ENCODE measurements at regions of chr17 and their contacts with region 1.

Region 1: DNA sequence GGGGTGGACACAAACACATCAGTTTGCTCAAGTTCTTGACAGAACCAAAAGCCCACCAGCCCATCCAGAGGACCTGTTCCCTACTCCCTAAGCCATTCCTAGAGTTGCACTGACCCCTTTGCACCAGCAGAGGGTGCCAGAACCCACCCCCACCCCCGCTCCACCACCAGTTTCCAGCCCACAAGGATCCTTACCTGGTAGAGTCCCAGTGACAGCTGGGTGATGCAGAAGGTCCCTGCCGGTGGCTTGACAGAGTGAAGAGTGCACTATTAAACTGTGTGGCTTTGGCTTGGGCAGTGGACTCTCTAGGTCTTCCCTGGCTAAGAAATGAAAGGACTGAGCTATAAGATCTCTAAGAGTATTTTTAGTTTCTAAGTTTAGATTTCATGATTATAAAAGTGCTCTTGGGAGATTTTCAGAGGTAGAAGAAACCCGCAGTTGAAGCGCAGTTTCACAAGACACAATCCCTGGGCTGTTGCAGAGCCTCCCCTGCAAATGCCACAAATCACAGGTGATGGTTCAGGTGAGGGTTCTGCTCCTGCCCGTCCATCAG is 73.3 kb upstream of the MTMR4 start:
- H3K4me3 ChIP-seq: no peak overlapping the region
- H3K27ac ChIP-seq: no peak overlapping the region
- H3K4me1 ChIP-seq: no peaks in the 10 kb centered on the region
- CTCF ChIP-seq: peak; percentile 90

Region 2: DNA sequence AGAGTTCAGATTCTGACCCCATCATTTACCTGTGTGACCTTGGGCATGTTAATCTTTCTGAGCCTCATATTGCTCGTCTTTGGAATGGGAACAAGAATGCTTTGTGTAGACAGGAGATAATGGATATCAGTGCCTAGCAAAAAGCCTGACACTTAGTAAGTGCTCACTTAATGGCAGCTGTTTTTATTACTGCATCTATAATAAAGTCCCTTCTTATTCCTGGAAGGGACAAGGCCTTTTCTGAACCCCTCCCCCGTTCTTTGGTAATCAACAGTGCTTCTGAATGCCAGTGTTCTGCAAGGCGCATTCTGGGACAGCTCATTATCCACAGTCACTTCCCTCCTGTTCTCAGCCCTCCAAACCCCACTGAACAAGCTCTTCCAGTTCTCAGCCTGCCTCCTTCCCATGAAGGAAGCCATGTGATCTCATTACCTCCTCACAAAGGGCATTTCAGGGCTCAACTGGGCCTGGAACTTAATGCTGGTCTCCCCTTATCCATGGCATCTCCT is 210.6 kb before region 1 on chr17:
- CTCF ChIA-PET with region 1: no interaction called
- POLR2A ChIA-PET with region 1: no interaction called
- H3K4me3 ChIP-seq: no peak overlapping the region
- H3K27ac ChIP-seq: no peak overlapping the region
- H3K4me1 ChIP-seq: peaks cover 4% of the 10 kb centered on the region; the same call in 1 of the 2 replicates
- CTCF ChIP-seq: no peak

Region 3: GRCh38 chr17:58531661-58532554 is 55.9 kb before region 1 on chr17:
- CTCF ChIA-PET with region 1: interaction called, 11 read pairs
- POLR2A ChIA-PET with region 1: interaction called, 6 read pairs
- H3K4me3 ChIP-seq: peak overlapping the region; percentile 45
- H3K27ac ChIP-seq: no peak overlapping the region; the same call in 1 of the 2 replicates
- H3K4me1 ChIP-seq: no peaks in the 10 kb centered on the region
- CTCF ChIP-seq: no peak; the same call in 1 of the 2 replicates

Region 4: DNA sequence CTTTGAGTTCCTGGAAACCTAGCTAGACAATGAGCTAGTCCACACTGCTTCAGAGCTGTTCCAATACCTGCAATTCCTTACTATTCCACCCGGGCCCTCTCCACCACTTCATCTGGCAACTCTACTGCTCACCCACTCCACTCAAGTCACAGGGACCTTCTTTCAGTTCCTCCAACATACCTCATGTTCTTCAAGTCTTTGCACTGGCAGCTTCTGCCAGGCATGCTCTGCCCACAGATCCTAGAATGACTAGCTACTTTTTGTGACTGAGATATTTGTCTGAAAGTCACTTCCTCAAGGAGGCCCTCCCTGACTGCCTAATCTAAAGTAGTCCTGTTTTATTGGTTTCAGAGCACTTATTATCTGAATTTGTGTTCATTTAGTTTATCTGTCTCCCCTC is 17.7 kb after region 1 on chr17:
- CTCF ChIA-PET with region 1: interaction called, 11 read pairs
- POLR2A ChIA-PET with region 1: no interaction called
- H3K4me3 ChIP-seq: no peak overlapping the region
- H3K27ac ChIP-seq: no peak overlapping the region
- H3K4me1 ChIP-seq: no peaks in the 10 kb centered on the region
- CTCF ChIP-seq: no peak

Region 5: DNA sequence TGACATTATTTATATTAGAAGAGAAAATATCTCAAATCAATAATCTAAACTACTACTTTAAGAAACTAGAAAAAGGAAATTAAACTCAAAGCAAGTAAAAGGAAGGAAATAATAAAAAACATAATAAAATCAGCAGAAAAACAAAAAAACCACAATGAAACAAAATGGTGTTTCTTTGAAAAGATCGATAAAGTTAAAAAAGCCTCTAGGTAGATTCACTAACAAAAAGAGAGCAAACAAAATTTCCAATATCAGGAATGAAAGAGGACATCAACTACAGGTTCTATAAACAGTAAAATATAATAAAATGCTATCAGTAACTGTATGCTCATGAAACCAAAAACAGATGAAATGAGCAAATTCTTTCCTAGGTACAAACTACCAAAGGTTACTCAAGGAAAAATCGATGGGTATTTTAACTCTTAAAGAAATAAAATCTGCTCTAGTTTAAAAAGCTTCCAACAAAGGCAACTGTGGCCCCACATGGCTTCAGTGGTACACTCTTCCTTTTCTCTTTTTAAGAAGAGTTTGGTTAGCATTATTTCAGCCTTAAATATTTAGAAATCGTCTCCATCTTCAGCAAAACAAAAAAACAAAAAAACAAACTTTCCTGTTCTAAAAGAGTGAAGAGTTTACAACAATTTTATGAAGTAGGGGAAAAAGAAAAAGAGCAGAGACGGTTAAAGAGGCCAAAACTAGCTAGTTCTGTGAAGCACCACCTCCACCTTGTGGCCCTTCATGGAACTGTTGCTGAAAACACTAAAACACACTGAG is 416.7 kb after region 1 on chr17:
- CTCF ChIA-PET with region 1: interaction called, 17 read pairs
- POLR2A ChIA-PET with region 1: no interaction called
- H3K4me3 ChIP-seq: no peak overlapping the region
- H3K27ac ChIP-seq: no peak overlapping the region
- H3K4me1 ChIP-seq: no peaks in the 10 kb centered on the region
- CTCF ChIP-seq: peak; percentile 83